Gastrocnemius medialis (tissue), 4 donors: ENCODE measurements at regions of chr2 and their contacts with region 1.

Region 1: DNA sequence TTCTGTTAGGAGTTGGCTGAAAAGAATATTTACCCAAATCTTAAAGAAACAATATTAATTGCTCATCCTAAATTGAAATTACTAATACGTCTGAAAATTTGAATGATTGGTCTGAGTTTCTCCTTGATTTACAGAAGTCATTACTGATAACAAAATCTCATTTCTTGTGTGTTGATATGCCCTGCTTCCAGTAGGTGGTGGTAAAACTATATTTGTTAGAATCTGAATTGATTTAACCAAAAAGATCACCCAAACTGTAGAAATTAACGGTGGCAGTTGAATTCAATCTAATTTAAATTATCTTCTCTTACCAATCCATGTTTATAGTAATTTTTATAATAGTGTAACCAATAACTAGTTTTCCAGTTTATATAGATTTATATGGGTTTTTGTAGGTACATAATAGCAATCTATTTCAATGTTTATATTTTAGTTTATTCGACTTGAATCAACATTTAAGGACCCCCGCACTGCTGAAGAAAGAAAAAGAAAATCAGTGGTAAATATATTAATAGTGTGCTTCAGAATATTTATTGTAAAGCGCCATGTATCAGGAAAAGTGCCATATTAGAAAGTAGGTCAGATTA is 38.3 kb downstream of the PAPOLG start:
- DNase-seq: no peak
- ATAC-seq: no peak
- H3K4me3 ChIP-seq: no peak overlapping the region
- H3K27ac ChIP-seq: no peak overlapping the region
- H3K4me1 ChIP-seq: no peaks in the 10 kb centered on the region
- H3K27me3 ChIP-seq: no peaks in the 10 kb centered on the region
- CTCF ChIP-seq: peak in 2 of 5 experiments; percentile 13 to 27
- POLR2A ChIP-seq: no peak

Region 2: DNA sequence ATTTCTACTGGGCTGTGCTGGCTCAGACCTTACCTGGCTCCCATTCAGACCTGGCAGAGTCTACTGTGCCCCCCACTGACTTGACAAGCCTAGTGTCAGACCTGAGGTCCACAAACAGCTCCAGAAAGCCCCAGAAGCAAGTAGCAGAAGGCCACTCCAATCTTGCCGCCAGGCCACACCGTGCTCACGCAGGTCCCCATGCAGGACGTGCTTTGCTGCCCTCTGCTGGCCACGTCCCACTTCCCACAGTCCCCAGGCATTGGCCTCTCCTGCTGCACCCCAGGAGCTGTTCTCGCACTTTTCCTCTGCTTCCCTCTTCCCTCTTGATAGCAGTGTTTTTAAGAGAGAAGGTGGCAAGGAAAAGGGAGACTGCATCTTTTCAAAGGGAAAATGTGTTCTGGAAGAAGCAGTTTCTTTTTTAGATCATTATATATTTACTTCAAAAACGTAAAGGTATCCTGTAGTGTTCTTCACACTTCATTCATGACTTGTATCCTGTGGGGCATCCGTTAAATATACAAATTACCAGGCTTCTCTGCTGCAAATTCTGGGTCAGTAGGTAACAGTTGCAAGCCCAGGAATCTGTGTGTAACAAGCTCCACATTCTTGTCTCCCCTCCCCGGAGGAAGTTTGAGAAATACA is 119.7 kb before region 1 on chr2:
- in situ Hi-C with region 1: no loop called
- intact Hi-C with region 1: no loop called
- DNase-seq: peak; percentile 51 to 58
- ATAC-seq: peak; percentile 83 to 85
- H3K4me3 ChIP-seq: no peak overlapping the region
- H3K27ac ChIP-seq: no peak overlapping the region
- H3K4me1 ChIP-seq: no peaks in the 10 kb centered on the region
- H3K27me3 ChIP-seq: peaks cover 0 to 5% (median 3%) of the 10 kb centered on the region in 3 donors
- CTCF ChIP-seq: peak; percentile 32 to 89 (median 67)
- POLR2A ChIP-seq: no peak

Region 3: GRCh38 chr2:60756191-60757041 is 38.0 kb before region 1 on chr2 and contains the start of gene PAPOLG:
- in situ Hi-C with region 1: no loop called
- intact Hi-C with region 1: no loop called
- DNase-seq: peak; percentile 92
- ATAC-seq: peak; percentile 96 to 97
- H3K4me3 ChIP-seq: peak within 1 kb of the TSS; percentile 75 to 100 (median 84)
- H3K27ac ChIP-seq: peak within 1 kb of the TSS; percentile 91 to 99 (median 94)
- H3K4me1 ChIP-seq: peaks cover 10 to 14% of the 10 kb centered on the region in 2 donors
- H3K27me3 ChIP-seq: no peaks in the 10 kb centered on the region
- CTCF ChIP-seq: no peak
- POLR2A ChIP-seq: peak; percentile 61 to 73
- total RNA-seq, gene PAPOLG: 8.4 to 13.6 (median 9.6) TPM

Region 4: DNA sequence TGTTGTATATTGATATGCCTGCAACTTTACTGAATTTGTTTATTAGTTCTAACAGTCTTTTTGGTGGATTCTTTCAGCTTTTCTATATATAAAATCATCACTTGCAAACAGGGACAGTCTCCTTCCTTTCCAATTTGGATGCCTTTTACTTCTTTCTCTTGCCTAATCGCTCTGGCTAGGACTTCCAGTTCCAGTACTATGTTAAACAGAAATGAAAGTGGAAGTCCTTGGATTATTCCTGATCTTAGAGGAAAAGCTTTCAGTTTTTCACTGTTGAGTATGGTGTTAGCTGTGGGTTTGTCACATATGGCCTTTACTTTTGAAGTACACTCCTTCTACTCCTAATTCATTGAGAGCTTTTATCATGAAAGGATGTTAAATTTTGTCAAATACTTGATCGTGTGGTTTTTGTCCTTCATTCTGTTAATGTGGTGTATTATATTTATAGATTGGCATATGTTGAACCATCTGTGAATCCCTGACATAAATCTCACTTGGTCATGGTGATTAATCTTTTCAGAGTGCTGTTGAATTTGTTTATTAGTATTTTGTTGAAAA is 139.9 kb after region 1 on chr2:
- in situ Hi-C with region 1: no loop called
- intact Hi-C with region 1: no loop called
- DNase-seq: no peak
- ATAC-seq: peak; percentile 82 to 91
- H3K4me3 ChIP-seq: peak overlapping the region in 3 of 4 donors; percentile 18 to 32 (median 26)
- H3K27ac ChIP-seq: peak overlapping the region in 3 of 4 donors; percentile 55 to 77 (median 70)
- H3K4me1 ChIP-seq: peaks cover 14 to 20% of the 10 kb centered on the region in 2 donors
- H3K27me3 ChIP-seq: no peaks in the 10 kb centered on the region
- CTCF ChIP-seq: no peak
- POLR2A ChIP-seq: no peak

Region 5: GRCh38 chr2:61006486-61007105 is 212.2 kb after region 1 on chr2:
- in situ Hi-C with region 1: loop called in 2 of 4 experiments (anchors 10 kb)
- intact Hi-C with region 1: no loop called
- DNase-seq: no peak
- ATAC-seq: no peak
- H3K4me3 ChIP-seq: no peak overlapping the region
- H3K27ac ChIP-seq: no peak overlapping the region
- H3K4me1 ChIP-seq: peaks cover 5 to 6% of the 10 kb centered on the region in 2 donors
- H3K27me3 ChIP-seq: no peaks in the 10 kb centered on the region
- CTCF ChIP-seq: no peak
- POLR2A ChIP-seq: no peak